CD8-positive, alpha-beta memory T cell (primary cell): ENCODE measurements at regions of chr3 and their contacts with region 1.

Region 1: GRCh38 chr3:141875374-141875892 is 1.0 kb upstream of the ATP1B3 start:
- DNase-seq: peak; percentile 74 to 87 (median 76)
- H3K4me3 ChIP-seq: peak overlapping the region; percentile 87
- H3K4me3 Mint-ChIP-seq: peak overlapping the region; percentile 86 to 99 (median 91)
- H3K27ac ChIP-seq: peak overlapping the region; percentile 85
- H3K27ac Mint-ChIP-seq: peak overlapping the region; percentile 86 to 99 (median 96)
- H3K4me1 ChIP-seq: peaks cover 24% of the 10 kb centered on the region
- H3K4me1 Mint-ChIP-seq: peaks cover 30 to 41% (median 40%) of the 10 kb centered on the region in 3 donors
- H3K27me3 ChIP-seq: no peaks in the 10 kb centered on the region
- H3K27me3 Mint-ChIP-seq: peaks cover 0 to 2% of the 10 kb centered on the region in 2 donors

Region 2: GRCh38 chr3:141796081-141796888 is 79.1 kb before region 1 on chr3:
- CTCF ChIA-PET with region 1: interaction called, 22 read pairs
- POLR2A ChIA-PET with region 1: interaction called, 31 read pairs
- DNase-seq: peak; percentile 34 to 84 (median 57)
- H3K4me3 ChIP-seq: peak overlapping the region; percentile 71
- H3K4me3 Mint-ChIP-seq: peak overlapping the region; percentile 87 to 96 (median 91)
- H3K27ac ChIP-seq: peak overlapping the region; percentile 69
- H3K27ac Mint-ChIP-seq: peak overlapping the region; percentile 86 to 99 (median 98)
- H3K4me1 ChIP-seq: peaks cover 54% of the 10 kb centered on the region
- H3K4me1 Mint-ChIP-seq: peaks cover 57 to 61% (median 59%) of the 10 kb centered on the region in 3 donors
- H3K27me3 ChIP-seq: no peaks in the 10 kb centered on the region
- H3K27me3 Mint-ChIP-seq: no peaks in the 10 kb centered on the region

Region 3: GRCh38 chr3:141840737-141841544 is 34.5 kb before region 1 on chr3:
- CTCF ChIA-PET with region 1: no interaction called
- POLR2A ChIA-PET with region 1: no interaction called
- DNase-seq: no peak
- H3K4me3 ChIP-seq: no peak overlapping the region
- H3K4me3 Mint-ChIP-seq: no peak overlapping the region
- H3K27ac ChIP-seq: no peak overlapping the region
- H3K27ac Mint-ChIP-seq: no peak overlapping the region
- H3K4me1 ChIP-seq: no peaks in the 10 kb centered on the region
- H3K4me1 Mint-ChIP-seq: peaks cover 0 to 7% (median 0%) of the 10 kb centered on the region in 3 donors
- H3K27me3 ChIP-seq: no peaks in the 10 kb centered on the region
- H3K27me3 Mint-ChIP-seq: no peaks in the 10 kb centered on the region

Region 4: DNA sequence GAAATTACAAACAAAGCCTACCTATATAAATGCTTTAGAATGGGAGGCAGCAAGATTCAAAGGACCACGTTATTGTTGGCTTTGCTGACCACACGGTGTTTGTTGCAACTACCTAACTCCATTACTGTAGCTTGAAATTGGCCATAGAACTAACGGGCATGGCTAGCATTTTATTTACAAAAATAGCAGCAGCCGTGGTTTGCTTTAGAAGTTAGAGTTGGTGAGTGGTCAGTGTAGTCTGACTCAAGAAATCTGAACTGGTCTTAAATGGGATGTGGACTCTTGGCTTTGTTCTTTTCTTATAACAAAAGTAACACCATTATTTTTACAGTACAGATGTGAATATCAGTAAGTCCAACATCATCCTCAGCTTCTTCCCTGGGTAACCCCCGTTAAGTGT is 11.6 kb after region 1 on chr3:
- CTCF ChIA-PET with region 1: interaction called, 12 read pairs
- POLR2A ChIA-PET with region 1: interaction called, 4 read pairs
- DNase-seq: no peak
- H3K4me3 ChIP-seq: no peak overlapping the region
- H3K4me3 Mint-ChIP-seq: no peak overlapping the region
- H3K27ac ChIP-seq: no peak overlapping the region
- H3K27ac Mint-ChIP-seq: no peak overlapping the region
- H3K4me1 ChIP-seq: peaks cover 3% of the 10 kb centered on the region
- H3K4me1 Mint-ChIP-seq: peaks cover 35 to 76% (median 63%) of the 10 kb centered on the region in 3 donors
- H3K27me3 ChIP-seq: no peaks in the 10 kb centered on the region
- H3K27me3 Mint-ChIP-seq: no peaks in the 10 kb centered on the region

Region 5: GRCh38 chr3:142134799-142135325 is 259.4 kb after region 1 on chr3:
- CTCF ChIA-PET with region 1: no interaction called
- POLR2A ChIA-PET with region 1: no interaction called
- DNase-seq: no peak
- H3K4me3 ChIP-seq: no peak overlapping the region
- H3K4me3 Mint-ChIP-seq: no peak overlapping the region
- H3K27ac ChIP-seq: no peak overlapping the region
- H3K27ac Mint-ChIP-seq: peak overlapping the region in 5 of 8 donors; percentile 10 to 66 (median 37)
- H3K4me1 ChIP-seq: no peaks in the 10 kb centered on the region
- H3K4me1 Mint-ChIP-seq: peaks cover 8 to 10% (median 9%) of the 10 kb centered on the region in 3 donors
- H3K27me3 ChIP-seq: no peaks in the 10 kb centered on the region
- H3K27me3 Mint-ChIP-seq: peaks cover 0 to 2% of the 10 kb centered on the region in 2 donors